CD14-positive monocyte (primary cell): ENCODE measurements at regions of chr10 and their contacts with region 1.

Region 1: GRCh38 chr10:102503281-102504220 is at the start of gene SUFU:
- DNase-seq: peak; percentile 98 to 99 (median 99)
- H3K4me3 ChIP-seq: peak within 1 kb of the TSS; percentile 93 to 99 (median 93)
- H3K4me3 Mint-ChIP-seq: peak within 1 kb of the TSS; percentile 94
- H3K27ac ChIP-seq: peak within 1 kb of the TSS; percentile 78 to 84
- H3K27ac Mint-ChIP-seq: peak within 1 kb of the TSS; percentile 83 to 95 (median 93)
- H3K4me1 ChIP-seq: peaks cover 57 to 69% of the 10 kb centered on the region in 2 donors
- H3K4me1 Mint-ChIP-seq: peaks cover 42% of the 10 kb centered on the region
- H3K27me3 ChIP-seq: no peaks in the 10 kb centered on the region
- H3K27me3 Mint-ChIP-seq: no peaks in the 10 kb centered on the region
- CTCF ChIP-seq: peak; percentile 96
- polyA plus RNA-seq, gene SUFU: 3.2 to 10.0 (median 5.7) TPM

Region 2: GRCh38 chr10:102132563-102133372 is 370.8 kb before region 1 on chr10 and contains the start of gene PPRC1:
- intact Hi-C with region 1: loop called (anchors 10 kb)
- DNase-seq: peak; percentile 96 to 98 (median 97)
- H3K4me3 ChIP-seq: peak within 1 kb of the TSS; percentile 79 to 98 (median 84)
- H3K4me3 Mint-ChIP-seq: peak within 1 kb of the TSS; percentile 95
- H3K27ac ChIP-seq: peak within 1 kb of the TSS; percentile 90 to 93
- H3K27ac Mint-ChIP-seq: peak within 1 kb of the TSS; percentile 93 to 97 (median 95)
- H3K4me1 ChIP-seq: peaks cover 16 to 25% of the 10 kb centered on the region in 2 donors
- H3K4me1 Mint-ChIP-seq: peaks cover 24% of the 10 kb centered on the region
- H3K27me3 ChIP-seq: no peaks in the 10 kb centered on the region
- H3K27me3 Mint-ChIP-seq: peaks cover 0 to 2% (median 0%) of the 10 kb centered on the region in 3 donors
- CTCF ChIP-seq: peak; percentile 99
- polyA plus RNA-seq, gene PPRC1: 1.1 to 15.6 (median 2.5) TPM

Region 3: GRCh38 chr10:102394079-102394800 is 109.3 kb before region 1 on chr10:
- intact Hi-C with region 1: loop called in 1 of 2 experiments (anchors 2 kb)
- DNase-seq: peak; percentile 98 to 99 (median 98)
- H3K4me3 ChIP-seq: peak overlapping the region; percentile 84 to 94 (median 89)
- H3K4me3 Mint-ChIP-seq: peak overlapping the region; percentile 91 to 95
- H3K27ac ChIP-seq: peak overlapping the region; percentile 96 to 100
- H3K27ac Mint-ChIP-seq: peak overlapping the region; percentile 98 to 100 (median 99)
- H3K4me1 ChIP-seq: peaks cover 28 to 39% of the 10 kb centered on the region in 2 donors
- H3K4me1 Mint-ChIP-seq: peaks cover 33% of the 10 kb centered on the region
- H3K27me3 ChIP-seq: peaks cover 0 to 13% of the 10 kb centered on the region in 2 donors
- H3K27me3 Mint-ChIP-seq: peaks cover 9 to 24% (median 19%) of the 10 kb centered on the region in 3 donors
- CTCF ChIP-seq: peak; percentile 65

Region 4: GRCh38 chr10:102583435-102584417 is 80.2 kb after region 1 on chr10:
- intact Hi-C with region 1: loop called (anchors 2 to 5 kb)
- DNase-seq: peak; percentile 68 to 85 (median 78)
- H3K4me3 ChIP-seq: no peak overlapping the region
- H3K4me3 Mint-ChIP-seq: no peak overlapping the region
- H3K27ac ChIP-seq: no peak overlapping the region
- H3K27ac Mint-ChIP-seq: no peak overlapping the region
- H3K4me1 ChIP-seq: peaks cover 19% of the 10 kb centered on the region in 2 donors
- H3K4me1 Mint-ChIP-seq: peaks cover 23% of the 10 kb centered on the region
- H3K27me3 ChIP-seq: no peaks in the 10 kb centered on the region
- H3K27me3 Mint-ChIP-seq: peaks cover 0 to 3% (median 0%) of the 10 kb centered on the region in 3 donors
- CTCF ChIP-seq: peak; percentile 87

Region 5: GRCh38 chr10:102743588-102744373 is 240.2 kb after region 1 on chr10 and contains the start of gene WBP1L:
- intact Hi-C with region 1: loop called in 1 of 2 experiments (anchors 10 kb)
- DNase-seq: peak; percentile 97 to 99 (median 98)
- H3K4me3 ChIP-seq: peak within 1 kb of the TSS; percentile 92 to 94 (median 93)
- H3K4me3 Mint-ChIP-seq: peak within 1 kb of the TSS; percentile 98 to 99
- H3K27ac ChIP-seq: peak within 1 kb of the TSS; percentile 56 to 91
- H3K27ac Mint-ChIP-seq: peak within 1 kb of the TSS; percentile 84 to 98 (median 94)
- H3K4me1 ChIP-seq: peaks cover 30 to 32% of the 10 kb centered on the region in 2 donors
- H3K4me1 Mint-ChIP-seq: peaks cover 37% of the 10 kb centered on the region
- H3K27me3 ChIP-seq: no peaks in the 10 kb centered on the region
- H3K27me3 Mint-ChIP-seq: peaks cover 0 to 9% (median 0%) of the 10 kb centered on the region in 3 donors
- CTCF ChIP-seq: no peak
- polyA plus RNA-seq, gene WBP1L: 24.8 to 43.0 (median 38.3) TPM